Sigmoid colon (tissue), 7 donors: ENCODE measurements at regions of chrX and their contacts with region 1.

Region 1: GRCh38 chrX:123590842-123591491 is 141.9 kb downstream of the THOC2 start:
- DNase-seq: no peak
- H3K4me3 ChIP-seq: no peak overlapping the region
- H3K27ac ChIP-seq: no peak overlapping the region
- H3K4me1 ChIP-seq: no peaks in the 10 kb centered on the region
- H3K27me3 ChIP-seq: no peaks in the 10 kb centered on the region
- CTCF ChIP-seq: no peak
- EP300 ChIP-seq: no peak
- POLR2A ChIP-seq: no peak

Region 2: DNA sequence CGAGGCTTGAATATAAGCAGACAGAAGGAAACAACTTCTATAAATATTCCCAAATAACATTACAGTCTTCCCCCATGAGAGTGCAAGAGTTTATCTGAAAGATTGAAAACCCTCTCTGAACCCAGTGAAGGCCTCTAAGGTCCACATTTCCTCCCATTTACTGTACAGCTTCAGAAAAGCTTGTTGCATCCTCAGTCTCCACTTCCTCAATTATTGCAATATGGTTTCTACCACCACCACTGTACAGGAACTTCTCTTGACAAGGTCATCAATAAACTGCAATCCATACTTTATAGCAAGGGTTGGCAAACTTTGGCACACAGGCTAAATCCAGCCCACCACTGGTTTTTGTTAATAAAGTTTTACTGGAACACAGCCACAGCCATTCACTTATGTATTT is 97.1 kb before region 1 on chrX:
- intact Hi-C with region 1: loop called (anchors 10 kb)
- DNase-seq: no peak
- H3K4me3 ChIP-seq: no peak overlapping the region
- H3K27ac ChIP-seq: no peak overlapping the region
- H3K4me1 ChIP-seq: no peaks in the 10 kb centered on the region
- H3K27me3 ChIP-seq: no peaks in the 10 kb centered on the region
- CTCF ChIP-seq: no peak
- EP300 ChIP-seq: no peak
- POLR2A ChIP-seq: no peak